A673 (cell line): ENCODE measurements at regions of chr10 and their contacts with region 1.

Region 1: DNA sequence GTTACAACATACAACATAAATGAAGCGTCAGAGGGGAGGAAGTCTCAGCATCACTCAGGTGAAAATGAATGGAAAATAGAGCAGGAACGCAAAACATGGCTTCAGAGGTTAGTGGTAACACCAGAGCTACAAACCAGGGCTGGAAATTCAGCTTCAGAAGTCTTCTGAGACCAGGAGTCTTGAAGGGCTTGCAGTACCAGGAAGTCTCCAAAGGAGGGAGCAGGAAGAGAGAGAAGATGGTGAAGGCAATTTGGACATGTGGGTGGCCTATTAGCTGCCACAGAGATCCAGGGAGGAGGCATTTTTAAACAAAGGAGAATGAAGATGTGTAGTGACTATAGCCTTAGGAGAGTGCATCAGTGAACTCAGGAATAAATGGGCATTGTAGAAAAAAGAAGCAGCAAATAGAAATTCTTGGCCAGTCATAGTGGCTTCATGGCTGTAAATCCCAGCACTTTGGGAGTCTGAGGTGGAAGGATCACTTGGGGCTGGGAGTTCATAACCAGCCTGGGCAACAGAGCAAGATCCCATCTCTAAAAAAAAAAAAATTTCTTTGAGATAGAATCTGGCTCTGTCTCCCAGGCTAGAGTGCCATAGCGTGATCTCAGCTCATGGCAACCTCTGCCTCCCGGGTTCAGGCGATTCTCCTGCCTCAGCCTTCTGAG is 9.3 kb upstream of the TET1 start:
- DNase-seq: peak; percentile 92
- H3K4me3 ChIP-seq: no peak overlapping the region
- H3K27ac ChIP-seq: no peak overlapping the region
- H3K4me1 ChIP-seq: peaks cover 3% of the 10 kb centered on the region
- H3K27me3 ChIP-seq: no peaks in the 10 kb centered on the region
- CTCF ChIP-seq: peak; percentile 86

Region 2: GRCh38 chr10:68423522-68423921 is 127.4 kb before region 1 on chr10:
- CTCF ChIA-PET with region 1: no interaction called
- POLR2A ChIA-PET with region 1: no interaction called
- intact Hi-C with region 1: no loop called
- DNase-seq: no peak
- H3K4me3 ChIP-seq: no peak overlapping the region
- H3K27ac ChIP-seq: peak overlapping the region; percentile 54
- H3K4me1 ChIP-seq: no peaks in the 10 kb centered on the region
- H3K27me3 ChIP-seq: no peaks in the 10 kb centered on the region
- CTCF ChIP-seq: no peak

Region 3: DNA sequence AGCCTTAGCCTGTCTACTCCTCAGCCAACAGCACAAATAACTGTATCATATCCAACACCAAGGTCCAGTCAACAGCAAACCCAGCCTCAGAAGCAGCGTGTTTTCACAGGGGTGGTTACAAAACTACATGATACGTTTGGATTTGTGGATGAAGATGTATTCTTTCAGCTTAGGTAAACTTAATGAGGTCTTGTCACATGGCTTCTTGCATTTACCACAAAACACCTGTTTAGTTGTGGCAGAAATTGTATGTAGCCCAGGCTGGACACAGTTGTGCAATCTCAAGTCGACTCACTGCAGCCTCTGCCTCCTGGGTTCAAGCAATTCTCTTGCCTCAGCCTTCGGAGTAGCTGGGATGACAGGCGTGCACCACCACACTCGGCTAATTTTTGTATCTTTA is 191.5 kb after region 1 on chr10:
- CTCF ChIA-PET with region 1: interaction called, 6 read pairs
- POLR2A ChIA-PET with region 1: interaction called, 13 read pairs
- intact Hi-C with region 1: no loop called
- DNase-seq: no peak
- H3K4me3 ChIP-seq: no peak overlapping the region
- H3K27ac ChIP-seq: no peak overlapping the region
- H3K4me1 ChIP-seq: no peaks in the 10 kb centered on the region
- H3K27me3 ChIP-seq: no peaks in the 10 kb centered on the region
- CTCF ChIP-seq: no peak

Region 4: DNA sequence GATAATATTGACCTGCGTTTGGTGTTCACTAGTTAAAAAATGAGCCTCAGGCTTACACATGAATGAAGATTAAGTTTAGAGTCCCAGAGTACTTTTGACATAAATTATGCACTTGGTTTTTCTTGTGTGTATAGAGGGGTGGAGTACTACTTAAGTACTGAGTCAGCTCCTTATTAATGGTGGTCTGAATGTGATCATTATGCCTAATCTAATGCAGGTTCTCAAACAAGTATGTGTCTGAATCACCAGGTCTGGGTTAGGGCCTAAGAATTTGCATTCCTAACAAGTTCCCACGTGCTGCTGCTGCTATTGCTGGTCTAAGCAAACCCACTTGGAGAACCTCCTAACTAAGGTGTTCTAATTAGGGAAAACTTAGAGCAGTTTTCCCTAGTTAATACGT is 245.7 kb after region 1 on chr10:
- CTCF ChIA-PET with region 1: no interaction called
- POLR2A ChIA-PET with region 1: no interaction called
- intact Hi-C with region 1: no loop called
- DNase-seq: no peak
- H3K4me3 ChIP-seq: no peak overlapping the region
- H3K27ac ChIP-seq: no peak overlapping the region
- H3K4me1 ChIP-seq: no peaks in the 10 kb centered on the region
- H3K27me3 ChIP-seq: no peaks in the 10 kb centered on the region
- CTCF ChIP-seq: no peak